ENCODE measurements at regions of chr3 and their contacts with region 1.

Region 1: DNA sequence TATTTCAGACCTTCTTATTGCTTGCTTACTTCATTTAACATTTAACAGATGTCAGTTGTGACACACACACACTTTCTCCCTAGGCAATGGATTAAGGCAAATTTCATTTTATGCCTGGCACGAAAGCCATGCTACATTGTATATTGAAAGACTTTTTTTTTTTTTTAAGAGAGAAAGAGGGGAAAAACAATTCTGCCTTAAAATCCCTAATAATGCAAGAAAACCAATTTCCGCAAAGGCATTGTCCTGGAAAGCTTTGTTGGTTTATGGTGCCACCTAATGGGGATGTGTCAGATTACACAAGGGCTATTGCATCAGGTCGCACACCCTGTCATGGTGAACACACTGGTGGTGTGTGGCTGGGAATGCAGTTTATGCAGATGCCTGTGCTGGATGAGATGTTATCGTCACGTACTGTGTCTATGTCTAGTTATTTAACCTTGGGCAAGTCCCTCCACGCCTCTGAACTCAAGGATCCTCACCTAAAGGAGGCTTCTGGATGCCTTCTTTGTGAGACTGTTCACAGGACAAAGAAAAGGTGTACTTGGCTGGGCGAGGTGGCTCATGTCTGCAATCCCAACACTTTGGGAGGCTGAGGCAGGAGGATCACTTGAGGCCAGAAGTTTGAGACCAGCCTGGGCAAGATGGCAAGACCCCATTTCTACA is 37.3 kb upstream of the RFTN1 start:
- DNase-seq: peak; percentile 42 to 78 (median 57)
- H3K4me3 ChIP-seq: no peak overlapping the region
- H3K27ac ChIP-seq: no peak overlapping the region
- H3K4me1 ChIP-seq: peaks cover 2% of the 10 kb centered on the region
- H3K27me3 ChIP-seq: no peaks in the 10 kb centered on the region
- CTCF ChIP-seq: peak; percentile 57 to 91 (median 87)
- EP300 ChIP-seq: no peak
- POLR2A ChIP-seq: no peak

Region 2: DNA sequence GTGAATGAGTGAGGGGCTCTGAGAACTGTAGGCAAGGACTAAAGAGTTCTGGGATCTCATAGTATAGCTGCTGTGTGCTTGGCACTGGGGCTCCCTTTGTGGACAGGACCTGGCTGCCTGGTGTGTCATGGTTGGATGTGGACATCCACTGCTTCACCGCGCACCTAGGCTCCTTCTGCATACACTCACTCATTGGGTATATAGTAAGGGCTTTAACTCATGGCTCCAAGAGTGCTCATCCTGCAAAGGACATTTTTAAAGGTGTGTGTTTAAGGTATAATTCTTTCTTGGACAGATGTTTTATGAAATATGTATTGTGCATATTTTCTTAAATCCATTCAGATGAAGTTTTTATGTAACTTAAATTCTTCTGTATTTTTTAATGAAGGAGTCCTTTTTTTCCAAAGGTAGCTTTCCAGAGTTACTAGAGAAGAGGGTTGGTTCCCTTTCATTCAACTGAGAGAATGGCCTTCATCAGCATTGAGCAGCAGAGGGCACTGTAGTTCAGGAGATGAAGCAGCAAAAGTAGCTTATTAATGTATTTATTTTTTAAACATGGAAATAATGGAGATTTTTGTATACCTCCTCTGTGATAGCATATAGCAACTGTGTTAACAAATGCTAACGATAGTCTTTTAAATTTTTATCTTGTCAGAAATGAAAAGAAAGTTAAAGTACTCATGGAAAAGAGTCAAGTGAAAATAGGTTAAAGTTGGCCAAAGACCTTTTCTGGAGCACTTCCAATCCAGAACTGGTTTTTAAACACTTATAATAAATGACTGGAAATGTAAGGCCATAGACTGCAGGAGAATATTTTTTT is 260.6 kb before region 1 on chr3:
- intact Hi-C with region 1: loop called (anchors 2 to 5 kb)
- DNase-seq: peak in 4 of 5 donors; percentile 36 to 70 (median 52)
- H3K4me3 ChIP-seq: no peak overlapping the region
- H3K27ac ChIP-seq: no peak overlapping the region
- H3K4me1 ChIP-seq: peaks cover 2% of the 10 kb centered on the region
- H3K27me3 ChIP-seq: no peaks in the 10 kb centered on the region
- CTCF ChIP-seq: peak; percentile 69 to 85 (median 79)
- EP300 ChIP-seq: no peak
- POLR2A ChIP-seq: no peak

Region 3: GRCh38 chr3:16570113-16570512 is 19.3 kb after region 1 on chr3:
- intact Hi-C with region 1: no loop called
- DNase-seq: no peak
- H3K4me3 ChIP-seq: no peak overlapping the region
- H3K27ac ChIP-seq: no peak overlapping the region
- H3K4me1 ChIP-seq: no peaks in the 10 kb centered on the region
- H3K27me3 ChIP-seq: no peaks in the 10 kb centered on the region
- CTCF ChIP-seq: no peak
- EP300 ChIP-seq: no peak
- POLR2A ChIP-seq: no peak